CD4-positive, alpha-beta memory T cell (primary cell): ENCODE measurements at regions of chr1 and their contacts with region 1.

Region 1: DNA sequence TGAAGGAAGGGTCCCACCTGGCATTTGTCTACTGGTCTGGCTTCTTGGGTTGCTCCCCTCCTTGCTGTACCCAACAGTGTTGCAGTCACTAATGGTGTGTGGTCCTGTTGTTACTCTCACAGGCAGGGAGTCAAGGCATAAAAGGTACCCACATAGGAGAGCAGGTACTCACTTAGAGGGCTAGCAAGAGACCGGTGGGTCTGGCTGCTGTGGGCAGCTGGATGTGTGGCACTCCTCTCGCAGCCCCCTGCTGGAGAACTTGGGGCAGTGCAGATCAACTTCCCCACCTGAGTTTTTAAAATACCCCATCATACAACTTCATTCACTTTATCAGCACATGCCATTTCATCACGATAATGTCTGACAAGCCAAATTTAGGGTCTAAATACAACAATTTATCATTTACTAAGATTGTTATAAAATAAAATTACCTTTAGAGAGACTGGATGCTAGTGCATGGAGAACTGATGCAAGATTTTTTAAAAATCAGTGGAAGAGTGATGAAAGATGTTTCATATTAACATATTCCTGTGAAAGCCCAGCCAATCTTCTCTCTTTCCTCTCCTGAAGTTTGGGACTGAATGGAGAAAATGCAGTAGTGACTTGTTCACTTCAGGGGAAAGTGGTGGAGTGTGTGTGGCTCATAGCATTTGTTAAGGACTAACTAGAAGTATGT is 42.8 kb downstream of the ACP6 start:
- DNase-seq: peak in 4 of 5 donors; percentile 42 to 54 (median 46)
- H3K4me3 ChIP-seq: no peak overlapping the region
- H3K4me3 Mint-ChIP-seq: peak overlapping the region in 2 of 8 donors; percentile 13 to 18
- H3K27ac ChIP-seq: no peak overlapping the region
- H3K27ac Mint-ChIP-seq: peak overlapping the region in 4 of 7 donors; percentile 10 to 62 (median 35)
- H3K4me1 ChIP-seq: peaks cover 31% of the 10 kb centered on the region
- H3K4me1 Mint-ChIP-seq: peaks cover 31 to 46% (median 37%) of the 10 kb centered on the region in 4 donors
- H3K27me3 ChIP-seq: no peaks in the 10 kb centered on the region
- H3K27me3 Mint-ChIP-seq: no peaks in the 10 kb centered on the region

Region 2: DNA sequence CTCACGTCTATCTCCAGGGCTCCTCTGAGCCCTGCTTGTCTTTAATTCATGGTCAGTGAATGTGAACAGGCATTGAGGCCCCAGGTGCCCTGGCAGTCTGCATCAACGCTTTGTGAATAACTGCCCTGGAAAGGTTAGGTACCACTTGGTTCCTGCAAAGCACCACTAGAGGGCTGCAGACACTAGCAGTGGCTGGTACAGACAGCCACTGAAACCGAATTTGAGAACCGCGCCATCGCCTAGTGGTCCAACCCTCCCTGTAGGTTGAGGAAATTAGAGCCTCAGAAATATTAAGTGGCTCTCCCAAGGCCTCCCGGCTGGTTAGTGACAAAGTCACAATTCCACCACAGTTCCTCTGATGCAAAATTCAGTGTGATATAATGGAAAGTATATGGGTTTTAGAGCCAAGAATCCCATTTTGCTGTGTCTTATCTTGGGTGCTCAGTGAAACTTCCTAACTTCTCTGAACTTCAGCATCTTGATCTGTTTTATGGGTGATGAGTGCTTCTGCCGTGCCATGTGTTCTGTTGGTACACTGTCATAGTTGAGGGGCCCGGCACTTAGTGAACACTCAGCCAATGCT is 132.5 kb before region 1 on chr1:
- CTCF ChIA-PET with region 1: interaction called, 26 read pairs
- POLR2A ChIA-PET with region 1: no interaction called
- intact Hi-C with region 1: loop called (anchors 1 kb)
- DNase-seq: peak; percentile 65 to 70 (median 67)
- H3K4me3 ChIP-seq: no peak overlapping the region
- H3K4me3 Mint-ChIP-seq: peak overlapping the region in 2 of 8 donors; percentile 12 to 64
- H3K27ac ChIP-seq: no peak overlapping the region
- H3K27ac Mint-ChIP-seq: no peak overlapping the region
- H3K4me1 ChIP-seq: no peaks in the 10 kb centered on the region
- H3K4me1 Mint-ChIP-seq: peaks cover 0 to 2% (median under 1%) of the 10 kb centered on the region in 4 donors
- H3K27me3 ChIP-seq: no peaks in the 10 kb centered on the region
- H3K27me3 Mint-ChIP-seq: peaks cover 0 to 10% of the 10 kb centered on the region in 2 donors

Region 3: DNA sequence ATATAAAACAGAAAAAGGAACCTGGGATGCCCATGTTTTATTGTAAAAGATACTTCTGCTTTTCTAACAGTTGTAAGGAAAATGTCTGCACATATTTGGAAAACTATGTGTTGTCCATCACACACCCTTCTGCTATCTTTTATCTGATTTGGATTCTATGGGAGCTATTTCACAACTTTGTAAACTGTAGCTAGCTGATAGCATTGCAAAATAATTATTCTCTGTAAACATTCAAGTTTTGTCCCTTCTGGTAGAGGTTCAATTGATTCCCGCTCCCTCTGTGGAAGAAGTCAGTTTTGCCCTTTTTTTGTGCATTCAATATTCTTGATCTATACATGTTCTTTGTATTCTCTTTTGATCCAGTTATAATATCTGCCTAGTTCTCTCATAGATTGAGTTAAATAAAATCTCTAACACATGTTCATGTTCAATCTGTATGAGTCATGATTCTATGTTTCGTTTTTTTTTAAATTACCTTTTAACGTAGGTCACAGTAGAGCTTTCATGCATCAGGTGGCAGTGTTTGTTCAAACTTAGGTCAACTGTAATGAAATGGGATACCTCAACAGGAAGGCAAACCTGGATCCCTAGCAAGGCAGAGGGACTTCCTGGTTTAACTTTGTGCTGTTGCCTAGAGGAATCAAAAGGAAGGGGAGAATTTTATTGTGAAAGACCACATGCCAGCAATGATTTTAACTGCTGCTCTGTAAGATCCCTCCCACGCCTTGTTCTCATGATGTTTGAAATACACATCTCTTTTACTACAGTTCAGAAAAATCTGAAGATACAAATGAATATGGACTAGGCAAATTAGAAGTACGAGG is 112.3 kb before region 1 on chr1:
- CTCF ChIA-PET with region 1: interaction called, 58 read pairs
- POLR2A ChIA-PET with region 1: no interaction called
- intact Hi-C with region 1: loop called (anchors 1 kb)
- DNase-seq: peak in 4 of 5 donors; percentile 9 to 29 (median 24)
- H3K4me3 ChIP-seq: no peak overlapping the region
- H3K4me3 Mint-ChIP-seq: no peak overlapping the region
- H3K27ac ChIP-seq: no peak overlapping the region
- H3K27ac Mint-ChIP-seq: peak overlapping the region in 2 of 7 donors; percentile 39 to 51
- H3K4me1 ChIP-seq: no peaks in the 10 kb centered on the region
- H3K4me1 Mint-ChIP-seq: peaks cover 5 to 7% (median 6%) of the 10 kb centered on the region in 4 donors
- H3K27me3 ChIP-seq: no peaks in the 10 kb centered on the region
- H3K27me3 Mint-ChIP-seq: peaks cover 0 to 9% of the 10 kb centered on the region in 2 donors

Region 4: DNA sequence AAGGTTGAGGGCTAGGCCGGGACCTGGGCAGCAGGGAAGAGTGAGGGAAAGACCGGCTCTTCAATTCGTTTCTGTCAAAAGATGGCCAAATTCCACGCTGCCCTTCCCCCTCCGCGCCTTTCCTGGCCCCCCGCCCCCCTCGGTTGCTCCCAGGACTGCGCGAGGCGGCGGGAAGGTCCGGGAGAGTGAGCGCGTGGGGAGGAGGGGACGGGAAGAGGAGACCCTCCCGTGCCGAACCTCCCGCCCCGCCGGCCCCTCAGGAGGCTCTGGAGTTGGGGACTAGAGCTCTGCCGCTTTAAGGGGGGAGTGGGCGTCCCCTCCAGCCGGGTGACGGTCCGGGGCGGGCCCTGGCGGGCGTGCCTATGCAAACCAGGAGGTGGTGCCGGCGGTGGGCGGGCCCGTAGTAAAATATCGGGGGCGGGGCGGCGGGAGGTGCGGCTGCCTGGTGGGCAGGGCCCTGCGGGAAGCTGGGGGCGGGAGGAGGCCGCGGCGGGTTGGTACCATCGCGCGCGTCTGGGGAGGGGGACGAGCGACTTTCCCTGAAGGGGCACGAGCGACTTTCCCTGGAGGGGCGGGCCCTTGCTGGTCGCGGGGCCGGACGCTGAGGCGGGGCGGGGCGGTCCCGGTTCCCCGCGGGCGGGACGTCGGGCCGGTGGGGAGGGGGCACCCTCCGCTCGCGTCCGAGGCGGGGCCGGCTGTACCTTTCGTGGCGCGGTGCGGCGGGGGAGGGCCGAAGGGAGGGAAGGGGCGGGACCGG is 28.0 kb before region 1 on chr1:
- CTCF ChIA-PET with region 1: interaction called, 18 read pairs
- POLR2A ChIA-PET with region 1: interaction called, 3 read pairs
- intact Hi-C with region 1: loop called (anchors 2 kb)
- DNase-seq: peak; percentile 94 to 96 (median 95)
- H3K4me3 ChIP-seq: peak overlapping the region; percentile 67 to 72
- H3K4me3 Mint-ChIP-seq: peak overlapping the region; percentile 86 to 92 (median 90)
- H3K27ac ChIP-seq: peak overlapping the region; percentile 47
- H3K27ac Mint-ChIP-seq: peak overlapping the region; percentile 48 to 91 (median 85)
- H3K4me1 ChIP-seq: peaks cover 24% of the 10 kb centered on the region
- H3K4me1 Mint-ChIP-seq: peaks cover 15 to 33% (median 25%) of the 10 kb centered on the region in 4 donors
- H3K27me3 ChIP-seq: no peaks in the 10 kb centered on the region
- H3K27me3 Mint-ChIP-seq: no peaks in the 10 kb centered on the region

Region 5: DNA sequence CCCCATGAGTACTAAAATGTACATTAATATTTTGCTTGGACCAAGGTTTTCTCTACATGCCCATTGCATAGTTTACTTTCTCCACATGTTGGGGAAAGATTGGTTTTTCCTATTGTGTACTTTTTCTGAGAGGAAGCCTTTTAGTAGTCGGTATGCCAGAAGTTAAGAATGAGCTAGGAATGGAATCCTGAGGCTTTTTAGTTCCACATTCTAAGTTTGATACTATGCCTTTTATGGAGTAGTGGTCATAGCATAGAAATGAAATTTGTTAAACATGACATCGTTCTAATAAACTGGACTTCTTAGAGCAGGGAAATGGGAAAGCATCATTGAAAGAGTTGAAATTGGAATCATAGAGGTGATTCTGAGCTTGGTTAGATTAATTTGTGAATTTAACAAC is 22.0 kb before region 1 on chr1:
- CTCF ChIA-PET with region 1: interaction called, 18 read pairs
- POLR2A ChIA-PET with region 1: no interaction called
- intact Hi-C with region 1: loop called (anchors 2 kb)
- DNase-seq: no peak
- H3K4me3 ChIP-seq: no peak overlapping the region
- H3K4me3 Mint-ChIP-seq: no peak overlapping the region
- H3K27ac ChIP-seq: no peak overlapping the region
- H3K27ac Mint-ChIP-seq: no peak overlapping the region
- H3K4me1 ChIP-seq: peaks cover 13% of the 10 kb centered on the region
- H3K4me1 Mint-ChIP-seq: peaks cover 13 to 25% (median 15%) of the 10 kb centered on the region in 4 donors
- H3K27me3 ChIP-seq: no peaks in the 10 kb centered on the region
- H3K27me3 Mint-ChIP-seq: no peaks in the 10 kb centered on the region

Region 6: DNA sequence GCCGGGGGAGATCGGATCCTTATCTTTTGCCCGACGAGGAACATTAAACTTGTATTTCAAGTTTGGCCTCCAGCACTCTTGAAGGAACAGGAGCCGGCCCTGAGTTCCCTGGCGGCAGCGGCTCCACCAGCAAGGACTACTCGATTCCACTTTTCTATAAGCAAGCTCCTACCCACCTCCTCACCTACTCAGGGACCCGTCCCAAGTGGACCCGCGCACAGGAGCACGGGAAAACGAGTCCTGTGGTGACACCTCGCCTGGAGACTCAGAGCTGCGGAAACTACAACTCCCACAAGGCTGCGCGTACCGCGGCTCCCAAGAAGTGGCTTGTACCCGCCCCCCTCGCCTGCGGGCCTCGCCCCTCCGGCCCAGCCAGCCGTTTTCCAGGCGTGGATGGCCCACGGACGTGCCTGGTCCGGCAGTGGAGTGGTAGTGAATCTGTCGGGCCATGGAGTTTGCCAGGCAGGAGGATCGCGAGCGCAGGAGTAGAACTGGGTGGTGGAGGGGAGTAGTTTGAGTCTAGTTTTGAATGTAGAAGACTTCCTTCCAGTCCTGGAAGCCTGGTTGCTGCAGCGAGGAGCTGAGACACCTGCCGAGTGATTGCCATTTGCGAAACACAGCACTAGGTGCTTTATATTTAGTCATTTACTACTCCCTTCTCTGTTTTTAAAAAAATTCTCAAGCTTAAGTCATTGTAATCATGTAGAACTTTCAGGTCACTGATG is 42.9 kb after region 1 on chr1 and contains the start of gene ACP6:
- CTCF ChIA-PET with region 1: no interaction called
- POLR2A ChIA-PET with region 1: no interaction called
- intact Hi-C with region 1: no loop called
- DNase-seq: peak; percentile 80 to 90 (median 84)
- H3K4me3 ChIP-seq: peak within 1 kb of the TSS; percentile 79 to 91
- H3K4me3 Mint-ChIP-seq: peak within 1 kb of the TSS; percentile 96 to 99 (median 97)
- H3K27ac ChIP-seq: peak within 1 kb of the TSS; percentile 70
- H3K27ac Mint-ChIP-seq: peak within 1 kb of the TSS; percentile 86 to 97 (median 93)
- H3K4me1 ChIP-seq: peaks cover 14% of the 10 kb centered on the region
- H3K4me1 Mint-ChIP-seq: peaks cover 17 to 34% (median 22%) of the 10 kb centered on the region in 4 donors
- H3K27me3 ChIP-seq: no peaks in the 10 kb centered on the region
- H3K27me3 Mint-ChIP-seq: peaks cover 0 to 4% of the 10 kb centered on the region in 2 donors
- total RNA-seq, gene ACP6: 22.0 to 22.7 TPM